ENCODE measurements at regions of chr17 and their contacts with region 1.

Region 1: GRCh38 chr17:42248351-42249179 is 27.6 kb downstream of the STAT5B start:
- DNase-seq: peak; percentile 84
- H3K4me3 Mint-ChIP-seq: peak overlapping the region; percentile 77
- H3K27ac Mint-ChIP-seq: peak overlapping the region; percentile 91
- H3K4me1 Mint-ChIP-seq: peaks cover 68% of the 10 kb centered on the region
- H3K27me3 Mint-ChIP-seq: no peaks in the 10 kb centered on the region

Region 2: GRCh38 chr17:42153919-42154742 is 94.4 kb before region 1 on chr17:
- CTCF ChIA-PET with region 1: no interaction called
- POLR2A ChIA-PET with region 1: no interaction called
- DNase-seq: no peak
- H3K4me3 Mint-ChIP-seq: peak overlapping the region; percentile 92
- H3K27ac Mint-ChIP-seq: peak overlapping the region; percentile 86
- H3K4me1 Mint-ChIP-seq: peaks cover 45% of the 10 kb centered on the region
- H3K27me3 Mint-ChIP-seq: no peaks in the 10 kb centered on the region

Region 3: GRCh38 chr17:42230225-42230624 is 18.3 kb before region 1 on chr17:
- CTCF ChIA-PET with region 1: interaction called, 3 read pairs
- POLR2A ChIA-PET with region 1: interaction called, 10 read pairs
- DNase-seq: peak; percentile 23
- H3K4me3 Mint-ChIP-seq: no peak overlapping the region
- H3K27ac Mint-ChIP-seq: peak overlapping the region; percentile 50
- H3K4me1 Mint-ChIP-seq: peaks cover 32% of the 10 kb centered on the region
- H3K27me3 Mint-ChIP-seq: no peaks in the 10 kb centered on the region

Region 4: DNA sequence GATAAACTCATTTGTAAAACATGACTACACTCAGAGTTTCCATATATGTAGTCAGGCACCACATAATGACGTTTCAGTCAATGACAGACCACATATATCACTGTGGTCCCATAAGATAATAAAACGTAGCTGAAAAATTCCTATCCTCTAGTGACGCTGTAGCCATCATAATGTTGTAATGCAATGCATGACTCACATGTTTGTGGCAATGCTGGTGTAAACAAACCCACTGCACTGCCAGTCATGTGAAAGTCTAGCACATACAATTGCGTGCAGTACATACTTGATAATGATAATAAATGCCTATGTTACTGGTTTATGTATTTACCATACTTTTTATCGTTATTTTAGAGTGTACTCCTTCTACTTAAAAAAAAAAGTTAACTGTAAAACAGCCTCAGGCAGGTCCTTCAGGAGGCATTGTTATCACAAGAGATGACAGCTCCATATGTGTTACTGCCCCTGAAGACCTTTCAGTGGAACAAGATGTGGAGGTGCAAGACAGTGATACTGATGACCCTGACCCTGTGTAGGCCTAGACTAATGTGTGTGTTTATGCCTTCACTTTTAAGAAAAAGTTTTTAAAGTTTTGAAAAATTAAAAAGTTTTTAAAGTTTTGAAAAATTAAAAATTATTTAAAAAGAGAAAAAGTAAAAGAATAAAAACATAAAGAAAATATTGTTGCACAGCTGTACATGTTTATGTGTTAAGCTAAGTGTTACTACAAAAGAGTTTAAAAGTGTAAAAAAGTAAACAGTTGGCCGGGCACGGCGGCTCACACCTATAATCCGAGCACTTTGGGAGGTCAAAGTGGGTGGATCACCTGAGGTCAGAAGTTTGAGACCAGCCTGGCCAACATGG is 18.6 kb after region 1 on chr17:
- CTCF ChIA-PET with region 1: interaction called, 15 read pairs
- POLR2A ChIA-PET with region 1: interaction called, 245 read pairs
- DNase-seq: peak; percentile 56
- H3K4me3 Mint-ChIP-seq: no peak overlapping the region
- H3K27ac Mint-ChIP-seq: peak overlapping the region; percentile 66
- H3K4me1 Mint-ChIP-seq: peaks cover 57% of the 10 kb centered on the region
- H3K27me3 Mint-ChIP-seq: no peaks in the 10 kb centered on the region

Region 5: DNA sequence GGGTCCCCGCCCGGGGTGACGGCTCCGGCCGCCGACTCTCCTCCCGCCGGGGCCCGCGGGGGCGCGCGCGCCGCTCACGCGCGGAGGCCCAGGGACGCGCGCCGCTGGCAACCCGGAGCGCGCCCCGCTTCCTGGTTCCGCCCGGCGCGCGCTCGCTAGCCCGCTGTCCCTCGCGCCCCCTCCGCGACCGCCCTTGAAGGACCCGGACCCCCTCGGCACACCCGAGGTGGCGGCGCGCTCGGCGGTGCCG is 27.7 kb after region 1 on chr17 and contains the start of gene STAT5B:
- CTCF ChIA-PET with region 1: interaction called, 18 read pairs
- POLR2A ChIA-PET with region 1: interaction called, 245 read pairs
- DNase-seq: peak; percentile 79
- H3K4me3 Mint-ChIP-seq: peak within 1 kb of the TSS; percentile 88
- H3K27ac Mint-ChIP-seq: peak within 1 kb of the TSS; percentile 83
- H3K4me1 Mint-ChIP-seq: peaks cover 41% of the 10 kb centered on the region
- H3K27me3 Mint-ChIP-seq: no peaks in the 10 kb centered on the region
- total RNA-seq, gene STAT5B: 163 to 171 TPM

Region 6: DNA sequence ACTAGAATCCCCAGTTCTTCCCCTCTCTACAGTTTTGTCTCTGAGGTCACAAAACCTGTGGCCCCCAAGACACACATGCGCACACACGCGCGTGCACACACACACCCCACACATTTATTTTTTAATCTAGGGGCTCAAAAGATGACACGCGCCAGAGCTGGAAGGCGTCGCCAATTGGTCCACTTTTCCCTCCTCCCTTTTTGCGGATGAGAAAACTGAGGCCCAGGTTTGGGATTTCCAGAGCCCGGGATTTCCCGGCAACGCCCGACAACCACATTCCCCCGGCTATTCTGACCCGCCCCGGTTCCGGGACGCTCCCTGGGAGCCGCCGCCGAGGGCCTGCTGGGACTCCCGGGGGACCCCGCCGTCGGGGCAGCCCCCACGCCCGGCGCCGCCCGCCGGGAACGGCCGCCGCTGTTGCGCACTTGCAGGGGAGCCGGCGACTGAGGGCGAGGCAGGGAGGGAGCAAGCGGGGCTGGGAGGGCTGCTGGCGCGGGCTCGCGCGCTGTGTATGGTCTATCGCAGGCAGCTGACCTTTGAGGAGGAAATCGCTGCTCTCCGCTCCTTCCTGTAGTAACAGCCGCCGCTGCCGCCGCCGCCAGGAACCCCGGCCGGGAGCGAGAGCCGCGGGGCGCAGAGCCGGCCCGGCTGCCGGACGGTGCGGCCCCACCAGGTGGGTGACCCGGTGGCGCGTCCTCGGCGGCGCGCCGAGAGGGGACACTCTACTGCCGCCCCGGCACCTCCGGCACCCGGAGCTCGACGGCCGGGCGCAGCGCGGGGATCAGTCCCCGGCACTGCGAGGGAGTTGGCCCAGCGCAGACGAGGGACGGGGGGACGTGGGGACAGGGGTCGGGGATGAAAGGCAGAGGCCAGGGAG is 39.6 kb after region 1 on chr17 and contains the start of gene STAT5A:
- CTCF ChIA-PET with region 1: interaction called, 5 read pairs
- POLR2A ChIA-PET with region 1: interaction called, 70 read pairs
- DNase-seq: peak; percentile 86
- H3K4me3 Mint-ChIP-seq: peak within 1 kb of the TSS; percentile 89
- H3K27ac Mint-ChIP-seq: peak within 1 kb of the TSS; percentile 86
- H3K4me1 Mint-ChIP-seq: peaks cover 59% of the 10 kb centered on the region
- H3K27me3 Mint-ChIP-seq: no peaks in the 10 kb centered on the region
- total RNA-seq, gene STAT5A: 88.4 to 96.7 TPM

Measured in activated CD4-positive, alpha-beta memory T cell treated with anti-CD3 and anti-CD28 coated beads, Interleukin-2, amount 10 ng/mL, durations not matched to agents 7 days and 5 days (primary cell).